ENCODE measurements at regions of chr14 and their contacts with region 1.

Region 1: DNA sequence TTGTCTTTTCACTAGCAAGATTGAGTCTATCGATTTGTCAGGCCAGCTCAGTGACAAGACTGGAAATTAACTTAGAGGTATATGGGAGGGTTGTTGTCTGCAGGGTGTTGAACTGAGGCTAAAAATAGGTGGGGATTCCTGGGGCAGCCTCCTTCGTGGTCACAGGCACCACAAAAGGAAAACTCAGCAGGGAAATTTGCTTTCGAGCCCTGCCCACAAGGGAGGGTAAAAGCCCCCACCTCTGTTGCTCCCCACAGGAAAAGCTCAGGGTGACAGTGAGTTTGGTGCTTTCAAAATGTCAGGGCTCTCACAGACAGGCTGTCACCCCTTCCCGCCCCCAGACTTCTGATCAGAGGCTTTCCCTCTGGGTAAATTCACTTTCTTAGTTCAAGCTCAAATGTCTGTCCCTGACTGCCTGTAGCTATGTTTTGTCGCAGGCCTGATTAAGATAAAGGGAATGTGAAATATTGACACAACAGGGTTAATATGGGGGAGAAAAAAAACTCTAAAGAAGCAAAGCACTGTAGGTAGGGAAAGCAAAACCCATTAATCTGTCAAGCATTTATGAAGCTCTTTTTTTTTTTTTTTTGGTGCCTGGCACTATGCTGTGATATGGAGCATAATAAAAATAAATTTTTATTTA is 11.7 kb upstream of the NFKBIA start:
- DNase-seq: no peak
- H3K4me3 ChIP-seq: no peak overlapping the region
- H3K27ac ChIP-seq: no peak overlapping the region
- H3K4me1 ChIP-seq: peaks cover 0 to 9% (median 4%) of the 10 kb centered on the region in 3 donors
- H3K27me3 ChIP-seq: no peaks in the 10 kb centered on the region
- CTCF ChIP-seq: no peak

Region 2: DNA sequence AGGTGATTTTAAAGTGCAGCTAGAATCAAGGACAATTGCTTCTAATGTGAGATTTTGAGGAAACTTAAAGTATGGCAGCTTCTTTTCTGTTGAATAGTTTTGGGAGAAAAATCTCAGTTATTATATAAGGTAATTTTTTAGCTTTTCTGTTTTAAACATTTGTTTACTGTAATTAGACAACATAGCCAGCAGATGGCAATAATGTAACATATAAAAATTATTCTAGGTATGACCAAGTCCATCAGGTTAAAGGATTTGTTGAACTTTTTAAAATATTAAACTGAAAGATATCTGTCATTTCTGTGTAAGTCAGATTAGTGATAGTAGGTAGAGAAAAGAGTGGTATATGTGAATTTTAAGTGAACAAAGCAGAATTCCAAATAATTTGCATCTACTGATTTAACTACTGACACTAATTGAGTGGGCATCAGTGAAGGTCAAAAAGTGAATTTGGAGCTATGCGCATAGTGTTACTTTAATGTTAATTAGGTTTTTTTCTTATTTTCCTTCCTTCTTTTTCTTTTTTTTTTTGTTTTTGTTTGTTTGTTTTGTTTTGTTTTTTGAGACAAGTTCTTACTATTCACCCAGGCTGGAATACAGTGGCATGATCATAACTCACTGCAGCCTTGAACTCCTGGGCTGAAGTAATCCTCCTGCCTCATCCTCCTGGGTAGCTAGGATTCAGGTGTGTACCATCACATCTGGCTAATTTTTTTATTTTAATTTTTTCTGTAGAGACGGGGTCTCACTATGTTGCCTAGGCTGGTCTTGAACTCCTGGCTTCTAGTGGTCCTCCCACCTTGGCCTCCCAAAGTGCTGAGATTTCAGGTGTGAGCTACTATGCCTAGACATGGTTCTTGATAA is 275.3 kb before region 1 on chr14:
- intact Hi-C with region 1: loop called (anchors 10 kb)
- DNase-seq: peak in 2 of 5 donors; percentile 27 to 32
- H3K4me3 ChIP-seq: no peak overlapping the region
- H3K27ac ChIP-seq: no peak overlapping the region
- H3K4me1 ChIP-seq: no peaks in the 10 kb centered on the region
- H3K27me3 ChIP-seq: no peaks in the 10 kb centered on the region
- CTCF ChIP-seq: peak; percentile 50

Region 3: DNA sequence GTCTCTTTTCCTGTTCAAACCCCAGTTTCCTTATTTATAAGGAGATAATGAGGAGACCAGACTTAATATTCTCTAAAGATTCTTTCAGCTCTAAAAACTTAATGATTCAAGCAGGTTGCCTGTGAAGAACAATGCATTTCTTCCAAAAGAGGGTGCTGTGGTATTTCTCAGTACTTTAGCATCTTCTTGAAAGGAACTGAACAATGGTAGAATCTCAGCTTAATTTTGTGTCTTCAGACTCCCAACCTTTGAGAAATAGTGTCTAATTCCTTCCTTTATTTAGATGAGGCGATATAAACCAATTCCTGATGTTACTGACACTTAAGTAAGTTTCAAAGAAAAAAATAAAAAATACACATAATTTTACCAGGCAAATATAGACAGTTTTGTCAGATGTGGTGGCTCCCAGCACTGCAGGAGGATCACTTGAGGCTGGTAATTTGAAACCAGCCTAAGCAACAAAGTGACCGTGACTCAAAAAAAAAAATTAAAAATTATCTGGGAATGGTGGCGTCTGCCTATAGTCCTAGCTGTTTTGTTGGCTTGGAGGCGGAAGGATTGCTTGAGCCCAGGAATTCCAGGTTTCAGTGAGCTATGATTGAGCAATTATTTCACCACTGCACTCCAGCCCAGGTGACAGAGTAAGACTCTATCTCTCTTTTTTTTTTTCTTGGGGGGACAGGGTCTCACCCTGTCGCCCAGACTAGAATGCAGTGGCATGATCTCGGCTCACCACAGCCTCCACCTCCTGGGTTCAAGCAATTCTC is 200.9 kb before region 1 on chr14:
- intact Hi-C with region 1: loop called (anchors 10 kb)
- DNase-seq: peak in 2 of 5 donors; percentile 53 to 81
- H3K4me3 ChIP-seq: no peak overlapping the region
- H3K27ac ChIP-seq: no peak overlapping the region
- H3K4me1 ChIP-seq: no peaks in the 10 kb centered on the region
- H3K27me3 ChIP-seq: no peaks in the 10 kb centered on the region
- CTCF ChIP-seq: peak; percentile 22

Region 4: DNA sequence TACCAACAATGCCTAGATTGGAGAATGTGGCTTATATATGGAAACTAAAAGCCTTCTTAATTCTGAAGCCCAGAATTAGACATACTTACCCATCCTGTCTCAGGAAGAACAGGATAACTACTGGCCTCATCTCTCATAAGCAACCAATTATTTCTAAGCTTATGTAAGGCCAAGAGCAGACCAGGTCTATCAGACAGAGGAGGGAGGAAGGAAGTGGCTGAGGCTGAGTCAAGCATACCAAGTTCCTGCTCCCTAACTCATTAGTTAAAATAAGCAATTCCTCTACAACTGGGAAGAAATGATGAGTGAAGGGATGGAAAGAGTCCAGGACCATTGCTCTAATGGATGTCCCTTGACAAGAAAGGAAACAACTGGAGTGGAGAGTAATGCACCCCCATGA is 90.7 kb after region 1 on chr14:
- intact Hi-C with region 1: no loop called
- DNase-seq: no peak
- H3K4me3 ChIP-seq: no peak overlapping the region
- H3K27ac ChIP-seq: no peak overlapping the region
- H3K4me1 ChIP-seq: no peaks in the 10 kb centered on the region
- H3K27me3 ChIP-seq: no peaks in the 10 kb centered on the region
- CTCF ChIP-seq: no peak

Measured in kidney (tissue), 22 donors.